ENCODE measurements at regions of chr14 and their contacts with region 1.

Region 1: GRCh38 chr14:57526942-57527341 is 33.3 kb upstream of the CCDC198 start:
- DNase-seq: peak; percentile 34 to 75
- H3K4me3 ChIP-seq: no peak overlapping the region
- H3K27ac ChIP-seq: no peak overlapping the region
- H3K4me1 ChIP-seq: no peaks in the 10 kb centered on the region
- H3K27me3 ChIP-seq: no peaks in the 10 kb centered on the region
- CTCF ChIP-seq: peak; percentile 56 to 73 (median 72)
- EP300 ChIP-seq: no peak
- POLR2A ChIP-seq: no peak
- RAD21 ChIP-seq: peak; percentile 54 to 68

Region 2: GRCh38 chr14:57352396-57353170 is 174.4 kb before region 1 on chr14:
- CTCF ChIA-PET with region 1: no interaction called
- POLR2A ChIA-PET with region 1: no interaction called
- DNase-seq: no peak
- H3K4me3 ChIP-seq: no peak overlapping the region
- H3K27ac ChIP-seq: no peak overlapping the region
- H3K4me1 ChIP-seq: no peaks in the 10 kb centered on the region
- H3K27me3 ChIP-seq: no peaks in the 10 kb centered on the region
- CTCF ChIP-seq: no peak
- EP300 ChIP-seq: no peak
- POLR2A ChIP-seq: no peak
- RAD21 ChIP-seq: no peak

Region 3: DNA sequence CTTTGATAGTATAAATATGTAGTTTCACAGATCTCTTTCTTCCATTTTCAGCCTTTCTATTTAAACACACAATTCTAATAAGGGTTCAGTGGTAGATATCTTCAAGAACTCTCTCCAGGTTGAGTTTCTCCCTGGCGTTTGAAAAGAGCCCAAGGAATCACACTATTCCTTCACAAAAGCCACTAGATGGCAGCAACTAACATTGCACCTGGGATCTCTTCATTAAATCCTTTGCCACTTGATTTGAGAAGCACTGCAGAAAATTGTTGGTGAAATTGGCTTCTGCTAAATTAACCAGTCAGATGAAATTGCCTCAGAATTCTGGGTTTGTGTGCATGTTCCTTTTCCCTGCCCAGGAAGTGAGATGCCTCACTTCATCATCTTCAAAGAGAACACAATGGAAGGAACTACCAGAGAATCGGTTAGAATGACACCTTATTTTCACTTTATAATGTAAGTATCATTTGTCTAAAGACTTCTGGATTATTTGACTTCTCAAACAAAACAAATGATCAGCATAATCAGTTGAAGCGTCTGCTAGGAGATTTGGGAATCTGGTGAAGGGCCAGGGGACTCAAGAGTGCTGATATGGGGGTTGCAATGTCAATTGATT is 40.1 kb before region 1 on chr14:
- CTCF ChIA-PET with region 1: interaction called, 14 read pairs
- POLR2A ChIA-PET with region 1: no interaction called
- DNase-seq: no peak
- H3K4me3 ChIP-seq: no peak overlapping the region
- H3K27ac ChIP-seq: no peak overlapping the region
- H3K4me1 ChIP-seq: no peaks in the 10 kb centered on the region
- H3K27me3 ChIP-seq: no peaks in the 10 kb centered on the region; a peak in 1 of 7 replicates
- CTCF ChIP-seq: peak in 2 of 3 experiments; percentile 62 to 76; a peak in 3 of 4 replicates
- EP300 ChIP-seq: no peak
- POLR2A ChIP-seq: no peak
- RAD21 ChIP-seq: peak; percentile 78 to 84

Region 4: GRCh38 chr14:57549765-57550420 is 23.0 kb after region 1 on chr14:
- CTCF ChIA-PET with region 1: interaction called, 12 read pairs
- POLR2A ChIA-PET with region 1: no interaction called
- DNase-seq: no peak
- H3K4me3 ChIP-seq: no peak overlapping the region
- H3K27ac ChIP-seq: no peak overlapping the region
- H3K4me1 ChIP-seq: no peaks in the 10 kb centered on the region
- H3K27me3 ChIP-seq: peaks cover 0 to 1% (median 0%) of the 10 kb centered on the region in 4 experiments; a peak in 1 of 7 replicates
- CTCF ChIP-seq: no peak
- EP300 ChIP-seq: no peak
- POLR2A ChIP-seq: no peak
- RAD21 ChIP-seq: no peak

Region 5: DNA sequence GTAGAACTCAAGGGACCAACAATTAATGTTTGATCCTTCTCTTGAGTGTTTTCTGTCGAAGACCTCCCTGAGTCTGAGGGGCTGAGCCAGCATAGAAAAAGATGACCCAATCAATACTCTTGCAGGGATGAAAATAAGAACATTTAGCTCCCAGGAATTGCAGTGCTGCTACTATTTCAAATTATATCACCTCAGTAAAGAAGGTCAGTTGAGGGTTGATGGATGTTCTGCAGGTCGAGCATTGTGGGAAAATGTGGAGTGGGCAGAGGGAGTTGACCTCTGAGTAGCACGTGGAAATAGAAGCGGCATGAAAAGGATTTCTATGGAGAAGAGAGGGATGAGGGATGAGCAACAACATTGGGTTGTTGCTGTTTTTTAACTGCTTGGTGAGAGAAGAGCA is 41.6 kb after region 1 on chr14:
- CTCF ChIA-PET with region 1: interaction called, 10 read pairs
- POLR2A ChIA-PET with region 1: no interaction called
- DNase-seq: no peak
- H3K4me3 ChIP-seq: no peak overlapping the region
- H3K27ac ChIP-seq: no peak overlapping the region
- H3K4me1 ChIP-seq: peaks cover 0 to 2% (median 0%) of the 10 kb centered on the region in 4 experiments; a peak in 2 of 7 replicates
- H3K27me3 ChIP-seq: no peaks in the 10 kb centered on the region
- CTCF ChIP-seq: no peak
- EP300 ChIP-seq: no peak
- POLR2A ChIP-seq: no peak
- RAD21 ChIP-seq: no peak

Region 6: GRCh38 chr14:57634340-57634739 is 107.4 kb after region 1 on chr14:
- CTCF ChIA-PET with region 1: interaction called, 17 read pairs
- POLR2A ChIA-PET with region 1: no interaction called
- DNase-seq: no peak
- H3K4me3 ChIP-seq: no peak overlapping the region
- H3K27ac ChIP-seq: no peak overlapping the region
- H3K4me1 ChIP-seq: no peaks in the 10 kb centered on the region
- H3K27me3 ChIP-seq: no peaks in the 10 kb centered on the region
- CTCF ChIP-seq: no peak
- EP300 ChIP-seq: no peak
- POLR2A ChIP-seq: no peak
- RAD21 ChIP-seq: no peak

Region 7: GRCh38 chr14:57871459-57872080 is 344.6 kb after region 1 on chr14:
- CTCF ChIA-PET with region 1: interaction called, 19 read pairs
- POLR2A ChIA-PET with region 1: no interaction called
- DNase-seq: peak in 1 of 2 experiments; percentile 54
- H3K4me3 ChIP-seq: no peak overlapping the region
- H3K27ac ChIP-seq: no peak overlapping the region
- H3K4me1 ChIP-seq: peaks cover 0 to 4% (median 0%) of the 10 kb centered on the region in 4 experiments; a peak in 1 of 7 replicates
- H3K27me3 ChIP-seq: peaks cover 1 to 3% (median 2%) of the 10 kb centered on the region in 4 experiments; a peak in 6 of 7 replicates
- CTCF ChIP-seq: peak; percentile 56 to 90 (median 77)
- EP300 ChIP-seq: no peak
- POLR2A ChIP-seq: no peak
- RAD21 ChIP-seq: peak; percentile 81 to 87

Region 8: GRCh38 chr14:58072288-58073071 is 545.5 kb after region 1 on chr14:
- CTCF ChIA-PET with region 1: interaction called, 12 read pairs
- POLR2A ChIA-PET with region 1: no interaction called
- DNase-seq: peak in 1 of 2 experiments; percentile 65
- H3K4me3 ChIP-seq: no peak overlapping the region
- H3K27ac ChIP-seq: no peak overlapping the region
- H3K4me1 ChIP-seq: no peaks in the 10 kb centered on the region
- H3K27me3 ChIP-seq: no peaks in the 10 kb centered on the region
- CTCF ChIP-seq: peak; percentile 14 to 76 (median 73)
- EP300 ChIP-seq: no peak
- POLR2A ChIP-seq: no peak
- RAD21 ChIP-seq: peak; percentile 86

Measured in H1 (cell line).